Panc1 (cell line): ENCODE measurements at regions of chr22 and their contacts with region 1.

Region 1: DNA sequence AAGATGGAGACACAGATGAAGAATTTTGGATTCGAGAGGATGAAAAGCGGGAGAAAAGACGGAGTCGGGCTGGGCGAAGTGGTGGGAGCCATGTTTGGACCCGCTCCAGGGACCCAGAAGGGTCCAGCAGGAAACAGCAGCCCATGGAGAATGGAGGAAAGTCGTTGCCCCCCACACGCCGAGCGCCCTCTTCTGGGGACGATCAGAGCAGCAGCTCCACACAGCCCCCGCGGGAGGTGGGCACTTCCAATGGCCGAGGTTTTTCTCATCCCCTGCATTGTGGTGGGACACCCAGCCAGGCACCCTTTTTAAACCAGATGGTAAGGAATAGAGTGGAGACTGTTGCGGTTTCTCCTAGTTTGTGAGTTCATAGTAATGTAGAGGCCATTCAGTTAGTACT is 22.8 kb upstream of the SLC25A18 start:
- DNase-seq: no peak
- ATAC-seq: no peak
- H3K4me3 ChIP-seq: no peak overlapping the region
- H3K27ac ChIP-seq: no peak overlapping the region
- H3K4me1 ChIP-seq: no peaks in the 10 kb centered on the region
- H3K27me3 ChIP-seq: no peaks in the 10 kb centered on the region
- CTCF ChIP-seq: no peak; the same call in 1 of the 2 replicates

Region 2: GRCh38 chr22:17672417-17672991 is 132.0 kb after region 1 on chr22:
- CTCF ChIA-PET with region 1: interaction called, 15 read pairs
- POLR2A ChIA-PET with region 1: no interaction called
- in situ Hi-C with region 1: no loop called
- intact Hi-C with region 1: no loop called
- DNase-seq: no peak
- ATAC-seq: no peak
- H3K4me3 ChIP-seq: no peak overlapping the region
- H3K27ac ChIP-seq: no peak overlapping the region
- H3K4me1 ChIP-seq: 0 out of 2 replicates have a peak, but pooled peaks cover 5% of the 10 kb centered on the region
- H3K27me3 ChIP-seq: no peaks in the 10 kb centered on the region
- CTCF ChIP-seq: no peak

Region 3: GRCh38 chr22:17700778-17701177 is 160.3 kb after region 1 on chr22:
- CTCF ChIA-PET with region 1: no interaction called
- POLR2A ChIA-PET with region 1: no interaction called
- in situ Hi-C with region 1: no loop called
- intact Hi-C with region 1: no loop called
- DNase-seq: no peak
- ATAC-seq: no peak
- H3K4me3 ChIP-seq: no peak overlapping the region
- H3K27ac ChIP-seq: no peak overlapping the region
- H3K4me1 ChIP-seq: peaks cover 3% of the 10 kb centered on the region
- H3K27me3 ChIP-seq: no peaks in the 10 kb centered on the region
- CTCF ChIP-seq: no peak

Region 4: GRCh38 chr22:17842386-17842785 is 301.9 kb after region 1 on chr22:
- CTCF ChIA-PET with region 1: no interaction called
- POLR2A ChIA-PET with region 1: no interaction called
- in situ Hi-C with region 1: no loop called
- intact Hi-C with region 1: no loop called
- DNase-seq: no peak
- ATAC-seq: no peak
- H3K4me3 ChIP-seq: no peak overlapping the region
- H3K27ac ChIP-seq: no peak overlapping the region
- H3K4me1 ChIP-seq: no peaks in the 10 kb centered on the region; the same call in 1 of the 2 replicates
- H3K27me3 ChIP-seq: no peaks in the 10 kb centered on the region
- CTCF ChIP-seq: no peak